ENCODE measurements at regions of chr6 and their contacts with region 1.

Region 1: GRCh38 chr6:30914076-30914853 is at the start of gene VARS2:
- DNase-seq: peak; percentile 100
- H3K4me3 Mint-ChIP-seq: peak within 1 kb of the TSS; percentile 78
- H3K27ac Mint-ChIP-seq: peak within 1 kb of the TSS; percentile 71
- H3K4me1 Mint-ChIP-seq: peaks cover 21% of the 10 kb centered on the region
- H3K27me3 Mint-ChIP-seq: no peaks in the 10 kb centered on the region
- CTCF ChIP-seq: peak; percentile 41
- total RNA-seq, gene VARS2: 33.0 and 34.2 TPM in 2 replicates

Region 2: GRCh38 chr6:30828027-30828960 is 86.0 kb before region 1 on chr6:
- CTCF ChIA-PET with region 1: interaction called, 27 read pairs
- intact Hi-C with region 1: no loop called
- DNase-seq: peak; percentile 99
- H3K4me3 Mint-ChIP-seq: no peak overlapping the region
- H3K27ac Mint-ChIP-seq: peak overlapping the region; percentile 12
- H3K4me1 Mint-ChIP-seq: peaks cover 37% of the 10 kb centered on the region
- H3K27me3 Mint-ChIP-seq: no peaks in the 10 kb centered on the region
- CTCF ChIP-seq: peak; percentile 95

Region 3: GRCh38 chr6:30883685-30884520 is 30.4 kb before region 1 on chr6 and contains the start of gene DDR1:
- CTCF ChIA-PET with region 1: interaction called, 50 read pairs
- intact Hi-C with region 1: no loop called
- DNase-seq: peak; percentile 82
- H3K4me3 Mint-ChIP-seq: peak within 1 kb of the TSS; percentile 89
- H3K27ac Mint-ChIP-seq: peak within 1 kb of the TSS; percentile 94
- H3K4me1 Mint-ChIP-seq: peaks cover 63% of the 10 kb centered on the region
- H3K27me3 Mint-ChIP-seq: peaks cover 16% of the 10 kb centered on the region
- CTCF ChIP-seq: no peak
- total RNA-seq, gene DDR1: 489 and 580 TPM in 2 replicates

Region 4: GRCh38 chr6:30942338-30943060 is 28.2 kb after region 1 on chr6:
- CTCF ChIA-PET with region 1: interaction called, 15 read pairs
- intact Hi-C with region 1: no loop called
- DNase-seq: peak; percentile 99
- H3K4me3 Mint-ChIP-seq: peak overlapping the region; percentile 29
- H3K27ac Mint-ChIP-seq: peak overlapping the region; percentile 45
- H3K4me1 Mint-ChIP-seq: peaks cover 38% of the 10 kb centered on the region
- H3K27me3 Mint-ChIP-seq: peaks cover 10% of the 10 kb centered on the region
- CTCF ChIP-seq: peak; percentile 77

Region 5: DNA sequence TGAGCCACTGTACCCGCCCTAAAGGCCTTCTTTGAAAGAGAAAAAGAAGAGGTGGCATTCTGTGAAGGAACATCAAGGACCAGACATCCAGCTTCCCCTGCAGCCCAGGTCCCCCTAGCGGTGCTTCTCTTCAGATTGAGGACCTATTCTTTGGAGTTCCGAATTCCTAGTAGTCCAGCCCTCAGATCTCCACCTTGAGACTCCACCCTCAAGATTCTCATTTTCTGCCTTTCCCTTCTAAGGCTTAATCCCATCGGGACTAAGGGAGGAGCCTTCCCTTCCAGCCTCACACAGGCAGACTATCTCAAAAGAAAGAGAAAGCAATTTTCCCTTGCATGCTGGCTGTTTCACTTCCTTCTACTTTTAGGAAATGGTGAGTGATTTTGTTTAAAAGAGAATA is 128.5 kb after region 1 on chr6:
- CTCF ChIA-PET with region 1: interaction called, 22 read pairs
- intact Hi-C with region 1: loop called (anchors 1 kb)
- DNase-seq: peak; percentile 82
- H3K4me3 Mint-ChIP-seq: no peak overlapping the region
- H3K27ac Mint-ChIP-seq: peak overlapping the region; percentile 14
- H3K4me1 Mint-ChIP-seq: peaks cover 31% of the 10 kb centered on the region
- H3K27me3 Mint-ChIP-seq: peaks cover 12% of the 10 kb centered on the region
- CTCF ChIP-seq: peak; percentile 85

Region 6: GRCh38 chr6:31128093-31128676 is 213.9 kb after region 1 on chr6:
- CTCF ChIA-PET with region 1: no interaction called
- intact Hi-C with region 1: loop called (anchors 5 kb)
- DNase-seq: peak; percentile 92
- H3K4me3 Mint-ChIP-seq: no peak overlapping the region
- H3K27ac Mint-ChIP-seq: peak overlapping the region; percentile 45
- H3K4me1 Mint-ChIP-seq: peaks cover 50% of the 10 kb centered on the region
- H3K27me3 Mint-ChIP-seq: no peaks in the 10 kb centered on the region
- CTCF ChIP-seq: peak; percentile 99

Region 7: GRCh38 chr6:31175971-31176370 is 261.7 kb after region 1 on chr6:
- CTCF ChIA-PET with region 1: no interaction called
- intact Hi-C with region 1: no loop called
- DNase-seq: no peak
- H3K4me3 Mint-ChIP-seq: peak overlapping the region; percentile 6
- H3K27ac Mint-ChIP-seq: peak overlapping the region; percentile 15
- H3K4me1 Mint-ChIP-seq: peaks cover 64% of the 10 kb centered on the region
- H3K27me3 Mint-ChIP-seq: no peaks in the 10 kb centered on the region
- CTCF ChIP-seq: no peak

Measured in Calu3 (cell line).